CD8-positive, alpha-beta T cell (primary cell): ENCODE measurements at regions of chr2 and their contacts with region 1.

Region 1: GRCh38 chr2:169540146-169540545 is 30.6 kb downstream of the KLHL41 start:
- DNase-seq: no peak
- ATAC-seq: no peak
- H3K4me3 ChIP-seq: no peak overlapping the region
- H3K4me3 Mint-ChIP-seq: no peak overlapping the region
- H3K27ac ChIP-seq: no peak overlapping the region
- H3K27ac Mint-ChIP-seq: no peak overlapping the region
- H3K4me1 ChIP-seq: no peaks in the 10 kb centered on the region
- H3K4me1 Mint-ChIP-seq: no peaks in the 10 kb centered on the region
- H3K27me3 ChIP-seq: no peaks in the 10 kb centered on the region
- H3K27me3 Mint-ChIP-seq: no peaks in the 10 kb centered on the region
- CTCF ChIP-seq: no peak

Region 2: GRCh38 chr2:169609264-169609663 is 69.1 kb after region 1 on chr2:
- CTCF ChIA-PET with region 1: no interaction called
- POLR2A ChIA-PET with region 1: no interaction called
- intact Hi-C with region 1: loop called in 1 of 2 experiments (anchors 2 kb)
- DNase-seq: no peak
- ATAC-seq: no peak
- H3K4me3 ChIP-seq: no peak overlapping the region
- H3K4me3 Mint-ChIP-seq: no peak overlapping the region
- H3K27ac ChIP-seq: no peak overlapping the region
- H3K27ac Mint-ChIP-seq: no peak overlapping the region
- H3K4me1 ChIP-seq: no peaks in the 10 kb centered on the region
- H3K4me1 Mint-ChIP-seq: no peaks in the 10 kb centered on the region
- H3K27me3 ChIP-seq: no peaks in the 10 kb centered on the region
- H3K27me3 Mint-ChIP-seq: no peaks in the 10 kb centered on the region
- CTCF ChIP-seq: no peak

Region 3: DNA sequence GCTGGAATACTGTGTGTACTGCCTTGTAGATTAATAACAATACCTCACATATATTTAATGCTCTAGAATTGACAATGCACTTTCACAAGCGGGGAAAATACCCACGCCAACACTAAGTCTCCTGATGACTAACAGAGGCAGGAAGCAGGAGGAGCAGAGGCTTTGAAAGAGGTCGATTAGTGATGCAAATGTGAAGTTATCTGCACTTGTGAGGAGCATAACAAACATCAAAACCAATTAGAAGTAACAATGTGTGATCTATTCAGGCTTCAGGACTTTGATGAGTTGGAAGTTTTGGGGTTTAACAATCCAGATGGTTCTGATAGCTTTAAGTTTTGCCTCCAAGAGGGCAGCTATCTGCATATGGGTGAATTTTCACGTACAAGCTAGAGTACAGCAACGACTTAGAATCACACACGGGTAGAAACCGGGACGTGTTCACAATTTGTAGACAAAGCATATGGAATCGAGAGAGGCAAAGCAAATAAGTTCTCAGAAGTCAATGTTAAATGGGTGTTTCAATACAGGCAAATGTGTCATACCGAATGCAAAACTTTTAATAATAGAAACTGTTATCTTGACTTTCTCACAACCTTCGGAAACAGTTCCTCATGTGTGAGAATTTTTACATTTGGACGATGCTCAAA is 1779.1 kb after region 1 on chr2:
- CTCF ChIA-PET with region 1: no interaction called
- POLR2A ChIA-PET with region 1: no interaction called
- intact Hi-C with region 1: no loop called
- DNase-seq: peak in 8 of 9 experiments; percentile 3 to 62 (median 32)
- ATAC-seq: peak; percentile 86
- H3K4me3 ChIP-seq: no peak overlapping the region
- H3K4me3 Mint-ChIP-seq: peak overlapping the region; percentile 32
- H3K27ac ChIP-seq: no peak overlapping the region
- H3K27ac Mint-ChIP-seq: peak overlapping the region; percentile 5
- H3K4me1 ChIP-seq: peaks cover 3% of the 10 kb centered on the region
- H3K4me1 Mint-ChIP-seq: peaks cover 30% of the 10 kb centered on the region
- H3K27me3 ChIP-seq: no peaks in the 10 kb centered on the region
- H3K27me3 Mint-ChIP-seq: no peaks in the 10 kb centered on the region
- CTCF ChIP-seq: no peak